ENCODE measurements at regions of chr12 and their contacts with region 1.

Region 1: DNA sequence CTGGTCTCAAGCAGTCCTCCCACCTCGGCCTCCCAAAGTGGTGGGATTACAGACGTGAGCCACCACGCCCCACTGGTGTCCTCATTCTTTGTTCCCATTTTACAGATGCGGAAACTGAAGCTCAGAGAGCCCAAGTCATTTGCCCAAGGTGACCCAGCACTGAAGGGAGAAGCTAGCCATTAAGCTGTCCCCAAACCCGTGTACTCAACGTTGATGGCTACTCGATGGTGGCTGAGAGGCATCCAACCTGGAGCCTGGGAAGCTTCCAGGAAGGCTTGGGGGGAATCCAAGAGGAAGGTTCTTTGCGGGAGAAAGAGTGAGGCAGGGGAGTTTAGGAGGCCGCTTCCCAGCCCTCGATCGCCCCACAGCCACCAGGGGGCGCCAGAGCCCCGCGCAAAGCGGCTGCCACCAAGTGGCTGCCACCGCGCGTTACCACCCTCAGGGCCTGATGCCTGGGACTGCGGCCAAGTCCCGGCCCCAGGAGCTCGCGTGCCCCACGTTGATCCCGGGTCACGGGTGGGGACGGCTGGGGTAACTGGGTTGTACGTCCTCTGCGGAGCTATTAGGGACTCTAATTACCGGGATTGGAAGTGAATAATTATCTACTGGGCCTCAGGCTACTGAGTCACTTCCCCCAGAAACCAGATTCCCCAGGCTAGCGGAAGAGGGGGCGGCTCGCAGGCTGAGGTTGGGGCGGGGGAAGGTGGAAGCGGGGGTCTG is 8.8 kb upstream of the SH2B3 start:
- DNase-seq: peak; percentile 94

Region 2: GRCh38 chr12:111339321-111339938 is 57.5 kb before region 1 on chr12:
- intact Hi-C with region 1: loop called (anchors 5 kb)
- DNase-seq: no peak

Region 3: GRCh38 chr12:111451649-111452129 is 54.8 kb after region 1 on chr12:
- intact Hi-C with region 1: loop called (anchors 2 kb)
- DNase-seq: no peak

Region 4: DNA sequence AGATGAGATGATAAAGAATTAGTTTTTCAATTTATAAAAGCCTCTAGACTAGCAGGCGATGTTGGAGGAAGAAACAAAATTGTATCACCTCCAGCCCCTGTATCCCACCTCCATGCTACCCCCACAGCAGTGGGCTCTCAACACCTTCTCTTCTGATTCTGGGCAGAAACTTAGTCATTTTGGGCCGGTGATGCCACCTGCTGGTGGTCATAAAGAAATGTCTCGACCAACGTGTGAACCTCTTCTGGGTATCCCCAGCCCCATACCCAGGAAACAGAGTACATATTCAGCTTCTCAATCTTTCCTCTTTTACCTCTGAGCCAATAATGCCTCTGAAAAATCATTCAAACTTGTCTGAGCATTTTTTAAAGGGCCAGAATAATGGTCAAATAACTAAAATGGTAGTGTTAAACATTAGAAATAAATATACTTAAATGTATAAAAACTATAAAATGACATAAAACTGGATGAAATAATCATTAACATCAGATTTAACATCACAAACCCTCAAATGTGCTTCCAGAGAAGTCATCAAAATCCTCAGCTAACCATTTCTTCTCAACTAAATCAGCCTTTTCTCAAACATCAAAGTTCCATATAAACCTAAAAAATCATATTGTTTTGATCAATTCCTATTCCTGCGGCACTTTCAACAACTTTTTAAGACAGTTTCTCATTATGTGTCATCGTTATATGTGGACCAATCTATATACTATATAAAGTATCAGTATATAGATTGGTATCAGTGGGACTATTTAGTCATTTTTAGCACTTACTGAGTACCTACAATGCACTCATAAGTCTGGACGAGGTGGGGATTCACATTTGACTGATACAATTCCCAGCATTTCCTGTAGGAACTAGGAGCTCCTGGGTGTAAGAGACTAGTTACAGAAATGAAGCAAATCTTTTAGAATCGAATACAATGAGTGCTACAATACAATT is 132.8 kb after region 1 on chr12:
- intact Hi-C with region 1: loop called (anchors 1 kb)
- DNase-seq: no peak

Measured in cardiac septum (tissue), 1 donor.